CD4-positive, alpha-beta memory T cell (primary cell): ENCODE measurements at regions of chr12 and their contacts with region 1.

Region 1: DNA sequence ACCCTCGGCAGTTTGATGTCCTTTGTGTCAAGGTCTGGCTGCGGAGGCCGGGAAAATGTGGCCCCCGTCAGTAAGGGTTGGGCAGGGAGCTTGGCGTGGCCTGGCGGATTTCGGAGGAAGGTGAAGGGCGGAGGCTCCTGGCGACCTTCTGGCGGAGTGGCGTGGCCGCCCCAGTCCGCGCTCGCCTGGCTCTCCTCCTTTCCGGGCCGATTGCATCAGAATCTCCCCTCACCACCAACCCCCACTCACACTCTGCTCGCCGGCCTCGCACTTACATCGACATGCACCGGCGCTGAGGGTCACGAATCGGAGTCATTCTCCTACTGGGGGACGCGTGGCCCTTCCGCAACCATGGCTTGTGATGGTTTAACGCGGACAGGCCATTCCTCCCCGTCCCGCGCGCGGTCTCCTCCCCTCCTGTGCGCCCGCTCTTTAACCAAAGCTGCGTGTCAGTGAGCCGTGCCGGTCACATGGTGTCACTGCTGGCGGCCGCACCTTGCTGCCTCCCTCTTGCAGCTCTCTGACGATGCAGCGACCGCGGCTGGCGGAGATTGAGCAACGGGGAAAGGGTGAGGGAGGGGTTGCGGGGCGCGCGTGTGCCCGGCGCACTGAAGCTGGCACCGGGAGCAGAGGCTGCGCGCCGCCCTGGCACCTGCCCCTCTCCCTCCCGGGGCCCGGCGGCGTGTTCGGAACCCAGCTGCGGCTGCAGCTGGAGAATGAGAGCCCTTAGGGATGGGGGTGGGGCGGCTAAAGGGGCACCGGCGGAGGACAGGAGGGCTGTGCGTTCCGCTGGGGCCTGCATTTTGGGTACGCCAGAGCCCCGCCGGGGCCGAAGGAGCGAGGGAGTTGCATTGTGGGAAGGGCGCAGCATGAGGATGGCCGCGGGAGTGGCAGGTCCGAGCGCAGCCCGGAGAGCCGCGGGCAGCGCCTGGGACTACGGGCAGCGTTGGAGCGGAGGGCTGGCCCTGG is at the start of gene SLC38A1:
- DNase-seq: peak; percentile 88 to 96 (median 89)
- H3K4me3 ChIP-seq: peak within 1 kb of the TSS; percentile 91 to 96
- H3K4me3 Mint-ChIP-seq: no peak within 1 kb of the TSS
- H3K27ac ChIP-seq: peak within 1 kb of the TSS; percentile 95
- H3K27ac Mint-ChIP-seq: no peak within 1 kb of the TSS
- H3K4me1 ChIP-seq: peaks cover 54% of the 10 kb centered on the region
- H3K4me1 Mint-ChIP-seq: peaks cover 16 to 47% (median 23%) of the 10 kb centered on the region in 4 donors
- H3K27me3 ChIP-seq: no peaks in the 10 kb centered on the region
- H3K27me3 Mint-ChIP-seq: no peaks in the 10 kb centered on the region
- total RNA-seq, gene SLC38A1: 265 to 272 TPM

Region 2: DNA sequence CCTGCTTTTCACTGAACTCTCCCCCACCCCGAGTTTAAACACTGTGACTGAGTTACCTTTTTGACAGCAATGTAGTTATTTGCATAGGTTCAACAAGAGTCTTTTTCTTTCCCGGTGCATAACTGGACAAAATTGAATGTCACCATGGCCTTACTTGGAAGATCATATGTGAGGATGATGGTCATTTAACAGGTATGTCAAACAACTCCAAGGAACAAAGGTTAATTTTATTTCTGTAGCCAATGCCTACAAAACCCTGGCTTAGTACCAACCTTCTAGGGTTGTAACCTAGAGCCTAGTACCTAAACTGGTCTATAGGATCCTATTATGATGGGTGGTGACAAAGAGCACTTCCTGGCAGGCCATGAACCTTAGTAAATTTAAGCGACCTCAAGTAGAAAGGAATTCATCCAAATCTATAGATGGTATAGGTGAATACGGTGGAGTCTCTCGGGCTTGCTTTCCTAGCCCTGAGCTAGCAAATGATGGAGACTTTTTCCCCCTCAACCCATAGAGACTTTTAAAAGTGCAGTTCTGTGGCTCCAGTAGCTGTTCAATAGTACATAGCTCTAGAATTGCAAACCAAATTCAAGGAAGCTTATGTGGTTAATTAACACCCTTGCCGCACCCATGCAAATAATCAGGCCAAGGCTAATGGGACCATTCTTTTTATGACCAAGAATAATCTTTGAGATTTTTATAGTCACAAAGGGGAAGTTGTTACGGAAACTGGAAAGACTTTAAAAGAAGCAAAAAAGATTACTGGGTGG is 89.0 kb before region 1 on chr12:
- CTCF ChIA-PET with region 1: interaction called, 3 read pairs
- POLR2A ChIA-PET with region 1: interaction called, 16 read pairs
- intact Hi-C with region 1: no loop called
- DNase-seq: no peak
- H3K4me3 ChIP-seq: no peak overlapping the region
- H3K4me3 Mint-ChIP-seq: peak overlapping the region in 4 of 8 donors; percentile 0 to 26 (median 18)
- H3K27ac ChIP-seq: no peak overlapping the region
- H3K27ac Mint-ChIP-seq: peak overlapping the region; percentile 48 to 93 (median 75)
- H3K4me1 ChIP-seq: peaks cover 37% of the 10 kb centered on the region
- H3K4me1 Mint-ChIP-seq: peaks cover 43 to 62% (median 48%) of the 10 kb centered on the region in 4 donors
- H3K27me3 ChIP-seq: no peaks in the 10 kb centered on the region
- H3K27me3 Mint-ChIP-seq: no peaks in the 10 kb centered on the region

Region 3: GRCh38 chr12:46217541-46218321 is 51.1 kb before region 1 on chr12:
- CTCF ChIA-PET with region 1: interaction called, 30 read pairs
- POLR2A ChIA-PET with region 1: interaction called, 552 read pairs
- intact Hi-C with region 1: loop called (anchors 1 kb)
- DNase-seq: peak; percentile 76 to 85 (median 81)
- H3K4me3 ChIP-seq: peak overlapping the region; percentile 42 to 56
- H3K4me3 Mint-ChIP-seq: peak overlapping the region; percentile 78 to 90 (median 84)
- H3K27ac ChIP-seq: peak overlapping the region; percentile 87
- H3K27ac Mint-ChIP-seq: peak overlapping the region; percentile 96 to 100 (median 98)
- H3K4me1 ChIP-seq: peaks cover 99% of the 10 kb centered on the region
- H3K4me1 Mint-ChIP-seq: peaks cover 88 to 98% (median 93%) of the 10 kb centered on the region in 4 donors
- H3K27me3 ChIP-seq: no peaks in the 10 kb centered on the region
- H3K27me3 Mint-ChIP-seq: no peaks in the 10 kb centered on the region

Region 4: GRCh38 chr12:46242569-46242968 is 26.3 kb before region 1 on chr12:
- CTCF ChIA-PET with region 1: interaction called, 4 read pairs
- POLR2A ChIA-PET with region 1: interaction called, 14 read pairs
- intact Hi-C with region 1: no loop called
- DNase-seq: no peak
- H3K4me3 ChIP-seq: no peak overlapping the region
- H3K4me3 Mint-ChIP-seq: peak overlapping the region in 2 of 8 donors; percentile 13 to 70
- H3K27ac ChIP-seq: no peak overlapping the region
- H3K27ac Mint-ChIP-seq: peak overlapping the region in 5 of 7 donors; percentile 2 to 58 (median 51)
- H3K4me1 ChIP-seq: peaks cover 83% of the 10 kb centered on the region
- H3K4me1 Mint-ChIP-seq: peaks cover 56 to 92% (median 75%) of the 10 kb centered on the region in 4 donors
- H3K27me3 ChIP-seq: no peaks in the 10 kb centered on the region
- H3K27me3 Mint-ChIP-seq: no peaks in the 10 kb centered on the region

Region 5: GRCh38 chr12:46303039-46303666 is 34.3 kb after region 1 on chr12:
- CTCF ChIA-PET with region 1: interaction called, 45 read pairs
- POLR2A ChIA-PET with region 1: interaction called, 17 read pairs
- intact Hi-C with region 1: loop called (anchors 1 kb)
- DNase-seq: peak; percentile 52 to 69 (median 62)
- H3K4me3 ChIP-seq: no peak overlapping the region
- H3K4me3 Mint-ChIP-seq: no peak overlapping the region
- H3K27ac ChIP-seq: no peak overlapping the region
- H3K27ac Mint-ChIP-seq: no peak overlapping the region
- H3K4me1 ChIP-seq: no peaks in the 10 kb centered on the region
- H3K4me1 Mint-ChIP-seq: peaks cover 3 to 4% (median 4%) of the 10 kb centered on the region in 4 donors
- H3K27me3 ChIP-seq: no peaks in the 10 kb centered on the region
- H3K27me3 Mint-ChIP-seq: no peaks in the 10 kb centered on the region